Activated naive CD4-positive, alpha-beta T cell treated with anti-CD3 and anti-CD28 coated beads for 36 hours (primary cell): ENCODE measurements at regions of chr3 and their contacts with region 1.

Region 1: DNA sequence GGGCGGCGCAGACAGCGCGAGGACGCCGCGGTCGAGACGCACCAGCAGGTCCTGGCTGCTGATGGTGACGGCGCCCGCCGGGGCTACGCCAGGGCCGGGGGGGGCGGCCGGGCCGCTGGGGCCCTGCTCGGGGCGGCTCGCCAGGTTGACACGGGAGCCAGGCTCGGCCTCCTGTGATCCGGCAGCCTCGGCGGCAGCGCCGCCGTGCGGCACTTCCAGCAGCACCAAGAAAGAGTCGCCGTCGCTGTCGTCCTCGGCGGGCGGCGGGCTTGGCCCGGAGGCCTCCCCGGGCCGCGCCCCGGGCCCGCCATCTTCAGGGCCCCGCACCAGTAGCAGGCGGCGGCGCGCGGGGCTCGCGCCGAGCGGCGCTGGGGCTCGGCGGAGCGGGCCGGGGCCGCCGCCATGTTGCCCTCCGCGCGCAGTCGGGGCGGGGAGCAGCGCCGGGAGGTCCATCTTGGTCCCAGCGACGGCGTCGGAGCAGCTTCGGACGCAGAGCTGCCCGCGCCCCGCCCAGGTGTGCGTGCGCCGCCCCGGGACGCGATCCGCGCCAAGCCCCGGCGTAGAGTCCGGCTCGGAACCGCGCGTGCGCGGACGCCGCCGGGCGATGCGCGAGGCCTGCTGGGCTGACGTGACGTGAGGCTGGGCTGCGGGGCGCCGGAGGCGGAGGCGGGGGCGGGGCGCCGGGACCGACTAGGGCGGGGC is at the start of gene ZXDC:
- DNase-seq: peak; percentile 91
- H3K4me3 Mint-ChIP-seq: peak within 1 kb of the TSS; percentile 90
- H3K27ac Mint-ChIP-seq: peak within 1 kb of the TSS; percentile 76
- H3K4me1 Mint-ChIP-seq: peaks cover 35% of the 10 kb centered on the region
- H3K27me3 Mint-ChIP-seq: no peaks in the 10 kb centered on the region
- total RNA-seq, gene ZXDC: 23.9 TPM

Region 2: GRCh38 chr3:125141596-125142419 is 1333.8 kb before region 1 on chr3:
- CTCF ChIA-PET with region 1: no interaction called
- intact Hi-C with region 1: loop called (anchors 10 kb)
- DNase-seq: peak; percentile 84
- H3K4me3 Mint-ChIP-seq: peak overlapping the region; percentile 67
- H3K27ac Mint-ChIP-seq: peak overlapping the region; percentile 50
- H3K4me1 Mint-ChIP-seq: peaks cover 34% of the 10 kb centered on the region
- H3K27me3 Mint-ChIP-seq: peaks cover 22% of the 10 kb centered on the region

Region 3: GRCh38 chr3:126083913-126084767 is 391.4 kb before region 1 on chr3 and contains the start of gene SLC41A3:
- CTCF ChIA-PET with region 1: no interaction called
- intact Hi-C with region 1: loop called (anchors 2 kb)
- DNase-seq: peak; percentile 88
- H3K4me3 Mint-ChIP-seq: peak within 1 kb of the TSS; percentile 92
- H3K27ac Mint-ChIP-seq: peak within 1 kb of the TSS; percentile 84
- H3K4me1 Mint-ChIP-seq: peaks cover 20% of the 10 kb centered on the region
- H3K27me3 Mint-ChIP-seq: no peaks in the 10 kb centered on the region
- total RNA-seq, gene SLC41A3: 24.0 to 24.7 TPM

Region 4: DNA sequence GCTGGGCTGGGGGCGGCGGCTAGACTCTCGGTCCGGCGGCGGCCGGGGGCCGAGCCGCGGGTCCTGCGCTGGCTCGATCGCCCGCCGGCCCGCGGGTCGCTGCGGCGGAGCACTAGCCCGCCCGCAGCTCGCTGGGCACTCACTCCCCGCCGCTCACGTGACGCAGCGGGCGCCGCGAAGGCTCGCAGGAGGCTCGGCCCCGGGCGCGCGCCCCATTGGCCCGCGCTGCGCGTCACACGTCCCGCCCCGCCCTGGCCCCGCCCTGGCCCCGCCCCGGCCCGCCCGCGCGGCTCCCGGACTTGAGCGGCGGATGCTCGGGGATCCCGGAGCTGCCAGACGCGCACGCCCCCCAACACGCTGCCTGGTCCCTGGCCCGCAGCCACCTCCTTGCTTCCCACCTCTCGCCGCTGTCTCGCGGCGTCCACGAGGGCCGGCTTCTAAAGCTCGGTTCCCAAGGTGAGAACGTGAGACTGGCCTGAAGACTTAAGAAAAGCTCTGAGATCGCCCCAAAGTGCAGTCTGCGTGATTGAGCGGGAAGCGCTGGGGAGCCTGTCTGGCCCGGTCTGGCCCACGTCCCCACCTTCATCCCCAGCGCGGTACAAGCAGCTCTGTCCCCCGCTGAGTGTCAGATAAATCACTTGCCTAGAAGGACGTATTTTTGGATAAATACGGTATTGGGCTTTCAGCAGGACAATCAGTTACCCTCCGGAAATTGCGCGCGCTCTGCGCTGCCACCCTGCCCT is 118.1 kb before region 1 on chr3 and contains the start of gene KLF15:
- CTCF ChIA-PET with region 1: no interaction called
- intact Hi-C with region 1: loop called (anchors 2 kb)
- DNase-seq: peak; percentile 76
- H3K4me3 Mint-ChIP-seq: peak within 1 kb of the TSS; percentile 82
- H3K27ac Mint-ChIP-seq: peak within 1 kb of the TSS; percentile 65
- H3K4me1 Mint-ChIP-seq: peaks cover 10% of the 10 kb centered on the region
- H3K27me3 Mint-ChIP-seq: peaks cover 41% of the 10 kb centered on the region
- total RNA-seq, gene KLF15: 0.62 to 0.89 TPM

Region 5: DNA sequence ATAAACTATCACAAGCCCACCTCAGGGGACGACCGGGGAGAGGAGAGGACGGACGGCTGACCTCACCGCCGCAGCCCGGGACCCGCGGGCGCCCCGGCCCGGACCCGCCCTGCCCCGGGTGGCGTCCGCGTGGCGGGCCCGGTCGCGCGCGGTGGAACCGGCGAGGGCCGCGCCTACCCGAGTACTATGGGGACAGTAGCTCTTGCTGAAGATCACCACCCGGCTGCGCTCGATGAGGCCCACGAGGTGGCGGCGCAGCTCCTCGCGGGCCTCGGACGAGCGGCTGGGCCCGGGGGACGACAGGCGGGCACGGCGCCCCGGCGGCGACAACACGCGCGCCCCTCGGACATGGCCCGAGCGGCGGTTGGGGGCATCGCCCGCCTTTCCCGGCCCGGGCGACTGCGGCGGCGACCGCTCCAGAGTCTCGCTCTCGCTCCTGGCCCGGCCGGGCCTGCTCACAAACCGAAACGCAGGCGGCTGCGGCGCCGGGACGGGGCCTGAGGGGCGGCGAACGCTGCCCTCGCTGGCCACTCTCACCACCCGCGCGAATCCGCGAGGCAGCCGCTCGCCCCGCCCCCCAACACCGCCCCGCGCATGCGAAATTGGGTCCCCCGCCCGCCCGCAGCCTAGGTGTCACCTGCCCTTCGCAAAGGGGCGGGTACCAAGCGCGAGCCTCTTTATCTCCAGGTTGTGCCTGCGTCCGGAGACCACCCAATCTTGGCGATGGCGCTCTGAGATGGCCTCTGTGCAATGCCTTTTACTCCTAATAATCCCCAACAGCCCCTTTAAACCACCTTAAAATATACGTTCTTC is 179.2 kb after region 1 on chr3 and contains the start of gene TXNRD3:
- CTCF ChIA-PET with region 1: no interaction called
- intact Hi-C with region 1: loop called (anchors 1 kb)
- DNase-seq: peak; percentile 80
- H3K4me3 Mint-ChIP-seq: peak within 1 kb of the TSS; percentile 77
- H3K27ac Mint-ChIP-seq: no peak within 1 kb of the TSS
- H3K4me1 Mint-ChIP-seq: peaks cover 6% of the 10 kb centered on the region
- H3K27me3 Mint-ChIP-seq: peaks cover 2% of the 10 kb centered on the region
- total RNA-seq, gene TXNRD3: 3.1 to 4.6 TPM

Region 6: GRCh38 chr3:126703512-126704462 is 228.2 kb after region 1 on chr3 and contains the start of gene CHCHD6:
- CTCF ChIA-PET with region 1: no interaction called
- intact Hi-C with region 1: loop called (anchors 1 kb)
- DNase-seq: peak; percentile 95
- H3K4me3 Mint-ChIP-seq: peak within 1 kb of the TSS; percentile 97
- H3K27ac Mint-ChIP-seq: peak within 1 kb of the TSS; percentile 65
- H3K4me1 Mint-ChIP-seq: peaks cover 19% of the 10 kb centered on the region
- H3K27me3 Mint-ChIP-seq: peaks cover 4% of the 10 kb centered on the region
- total RNA-seq, gene CHCHD6: 17.2 to 17.7 TPM

Region 7: GRCh38 chr3:127512256-127512655 is 1036.7 kb after region 1 on chr3:
- CTCF ChIA-PET with region 1: no interaction called
- intact Hi-C with region 1: no loop called
- DNase-seq: no peak
- H3K4me3 Mint-ChIP-seq: no peak overlapping the region
- H3K27ac Mint-ChIP-seq: no peak overlapping the region
- H3K4me1 Mint-ChIP-seq: no peaks in the 10 kb centered on the region
- H3K27me3 Mint-ChIP-seq: peaks cover 6% of the 10 kb centered on the region

Region 8: GRCh38 chr3:127598841-127599570 is 1123.4 kb after region 1 on chr3:
- CTCF ChIA-PET with region 1: no interaction called
- intact Hi-C with region 1: loop called (anchors 5 kb)
- DNase-seq: no peak
- H3K4me3 Mint-ChIP-seq: peak overlapping the region; percentile 84
- H3K27ac Mint-ChIP-seq: peak overlapping the region; percentile 89
- H3K4me1 Mint-ChIP-seq: peaks cover 40% of the 10 kb centered on the region
- H3K27me3 Mint-ChIP-seq: no peaks in the 10 kb centered on the region